Left ventricle myocardium superior (tissue), 1 donor: ENCODE measurements at regions of chr15 and their contacts with region 1.

Region 1: GRCh38 chr15:40044717-40045571 is 6.0 kb upstream of the SRP14 start:
- DNase-seq: peak; percentile 94
- ATAC-seq: peak; percentile 92

Region 2: DNA sequence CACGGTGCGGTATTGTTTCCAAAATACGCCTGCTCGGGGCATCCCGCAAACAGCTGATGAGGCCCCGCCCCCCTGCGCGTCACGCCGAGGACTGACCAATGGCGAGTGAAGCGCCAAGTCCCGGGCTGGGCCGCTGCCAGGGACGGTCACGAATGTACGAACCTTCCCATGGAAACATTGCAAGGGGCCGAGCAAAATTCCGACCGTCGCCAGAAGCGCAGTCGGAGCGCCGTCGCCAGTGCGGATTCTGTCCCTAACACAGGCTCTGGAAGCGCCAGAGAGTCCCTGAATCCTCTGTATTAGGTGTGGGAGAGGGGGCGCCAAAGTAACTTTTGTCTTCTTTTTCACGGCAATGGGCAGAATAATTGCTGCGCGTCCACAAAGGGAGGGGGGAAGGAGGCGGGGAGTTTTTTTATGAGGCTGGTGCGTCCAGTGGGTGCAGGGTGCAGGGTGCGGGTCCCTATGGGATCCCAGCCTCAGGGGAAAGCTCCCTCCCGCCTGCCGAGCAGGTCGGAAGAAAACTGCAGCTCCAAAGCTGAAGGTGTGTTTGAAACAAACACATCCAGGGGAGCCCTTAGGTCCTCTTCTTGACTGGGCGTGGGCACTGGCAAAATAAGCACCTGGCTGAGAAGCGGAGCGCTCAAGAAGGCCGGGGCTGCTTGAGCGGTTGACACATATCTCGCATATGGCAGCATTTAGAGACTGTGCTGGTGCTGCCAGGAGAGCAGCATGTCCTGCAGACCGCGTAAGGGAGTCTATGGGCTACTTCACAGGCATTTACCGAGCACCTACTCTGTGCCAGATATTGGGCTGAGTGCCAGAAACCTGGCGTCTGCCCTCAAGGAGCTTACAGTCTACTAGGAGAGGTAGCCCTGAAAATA is 64.2 kb after region 1 on chr15 and contains the start of gene BMF:
- intact Hi-C with region 1: loop called (anchors 10 kb)
- DNase-seq: peak; percentile 100
- ATAC-seq: peak; percentile 83
- total RNA-seq, gene BMF: 3.2 TPM